Mammary epithelial cell (primary cell): ENCODE measurements at regions of chr4 and their contacts with region 1.

Region 1: DNA sequence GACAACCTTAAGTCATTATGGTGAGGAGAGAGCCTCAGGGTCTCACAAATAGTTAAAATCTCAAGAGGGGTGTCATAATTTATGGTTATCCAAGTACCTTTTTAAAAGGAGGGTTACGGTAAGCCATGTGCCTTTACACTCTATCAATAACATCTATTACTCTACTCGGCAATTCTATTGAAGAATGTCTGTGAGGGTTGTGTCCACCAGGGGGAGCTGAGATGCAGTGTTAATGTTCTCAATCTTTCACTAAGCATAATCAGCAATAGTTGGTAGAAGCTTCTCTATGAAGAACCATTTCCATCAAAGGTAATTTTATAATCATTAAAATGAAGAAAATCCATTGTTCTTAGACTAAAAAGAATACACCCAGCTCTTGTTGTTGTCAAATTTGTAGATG is 457.4 kb downstream of the CENPC start:
- DNase-seq: peak; percentile 22
- H3K4me3 ChIP-seq: no peak overlapping the region
- H3K27ac ChIP-seq: no peak overlapping the region
- H3K4me1 ChIP-seq: no peaks in the 10 kb centered on the region
- H3K27me3 ChIP-seq: peaks cover 2% of the 10 kb centered on the region
- CTCF ChIP-seq: peak; percentile 79 to 82

Region 2: DNA sequence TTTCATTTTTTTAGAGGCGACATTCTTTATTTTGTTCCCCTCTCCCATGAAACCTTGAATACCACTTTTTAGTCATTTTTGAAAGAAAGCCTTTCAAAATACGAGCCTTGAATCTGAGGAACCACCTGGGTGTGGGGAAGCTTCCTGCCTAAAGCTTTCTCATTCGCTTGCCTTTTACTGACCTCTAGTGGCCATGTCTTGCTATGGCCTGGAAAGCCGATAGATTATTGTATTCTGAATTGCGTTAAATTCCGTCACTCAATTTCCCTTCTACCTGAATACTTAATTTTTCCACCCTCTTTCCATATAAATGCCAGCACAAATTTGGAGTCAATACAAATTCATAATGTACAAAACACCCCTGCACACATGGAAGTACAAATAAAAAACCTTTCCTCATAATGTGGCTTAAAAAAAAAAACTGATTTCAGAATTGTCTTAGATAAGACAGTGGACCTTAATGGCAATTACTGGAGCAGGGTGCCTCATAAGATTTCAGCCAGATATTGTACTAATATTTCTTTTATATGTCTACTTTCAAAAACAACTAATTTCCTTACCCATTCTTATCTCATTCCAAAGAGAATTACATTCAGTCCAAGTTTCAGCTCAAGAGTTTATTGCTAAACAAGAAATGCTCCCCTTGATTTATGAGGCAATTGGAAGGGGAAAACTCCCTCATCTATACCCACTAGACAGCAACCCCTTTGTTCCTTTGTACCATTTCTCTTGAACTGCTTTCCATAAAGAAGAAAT is 239.5 kb after region 1 on chr4:
- CTCF ChIA-PET with region 1: interaction called, 3 read pairs
- dilution Hi-C with region 1: no loop called
- in situ Hi-C with region 1: no loop called
- intact Hi-C with region 1: loop called (anchors 1 kb)
- DNase-seq: peak; percentile 37
- H3K4me3 ChIP-seq: no peak overlapping the region
- H3K27ac ChIP-seq: no peak overlapping the region
- H3K4me1 ChIP-seq: no peaks in the 10 kb centered on the region
- H3K27me3 ChIP-seq: peaks cover 4% of the 10 kb centered on the region
- CTCF ChIP-seq: peak; percentile 89 to 92